Activated CD8-positive, alpha-beta T cell treated with anti-CD3 and anti-CD28 coated beads, Interleukin-2, amount 10 ng/mL, durations not matched to agents 7 days and 5 days (primary cell): ENCODE measurements at regions of chr4 and their contacts with region 1.

Region 1: DNA sequence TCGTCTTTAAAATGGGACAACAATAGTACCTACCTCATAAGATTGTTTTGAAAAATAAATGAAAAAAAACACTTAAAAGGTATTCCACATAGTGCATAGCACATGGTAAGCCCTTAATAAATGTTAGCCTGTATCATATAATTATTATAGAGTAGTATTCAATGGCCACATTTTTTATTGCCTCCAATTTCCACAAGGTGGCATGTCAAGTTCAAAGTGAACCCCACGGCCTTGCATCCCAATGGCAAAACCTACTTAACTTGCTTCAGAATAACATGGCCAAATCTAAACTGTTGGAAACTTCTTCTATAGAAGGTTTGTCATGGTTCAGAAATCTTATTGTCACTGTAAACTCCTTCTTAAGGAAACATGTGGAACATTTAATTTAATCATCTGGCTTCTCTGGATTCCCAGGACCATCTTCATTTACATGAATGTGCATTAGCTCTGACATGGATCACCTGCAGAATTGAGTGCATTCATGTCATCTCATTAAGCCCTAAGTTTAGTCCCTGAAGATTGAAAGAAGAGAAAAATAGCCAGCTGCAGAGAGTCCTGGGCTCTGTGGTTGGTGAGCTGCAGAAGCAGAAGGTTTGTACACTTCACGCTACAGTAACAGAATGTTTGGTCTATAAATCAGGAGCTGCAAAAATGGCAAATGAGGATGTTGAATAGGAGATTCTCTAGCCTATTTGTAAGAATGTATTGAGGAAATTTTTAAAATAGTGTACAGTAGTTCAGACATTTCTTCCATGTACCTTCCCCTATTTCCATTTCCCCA is 61.0 kb downstream of the ANXA3 start:
- DNase-seq: peak; percentile 47
- ATAC-seq: peak; percentile 60
- H3K4me3 Mint-ChIP-seq: no peak overlapping the region
- H3K27ac Mint-ChIP-seq: no peak overlapping the region
- H3K4me1 Mint-ChIP-seq: peaks cover 42% of the 10 kb centered on the region
- H3K27me3 Mint-ChIP-seq: no peaks in the 10 kb centered on the region

Region 2: GRCh38 chr4:78753091-78753490 is 140.5 kb after region 1 on chr4:
- CTCF ChIA-PET with region 1: no interaction called
- POLR2A ChIA-PET with region 1: no interaction called
- DNase-seq: no peak
- ATAC-seq: no peak
- H3K4me3 Mint-ChIP-seq: no peak overlapping the region
- H3K27ac Mint-ChIP-seq: no peak overlapping the region
- H3K4me1 Mint-ChIP-seq: no peaks in the 10 kb centered on the region
- H3K27me3 Mint-ChIP-seq: no peaks in the 10 kb centered on the region

Region 3: DNA sequence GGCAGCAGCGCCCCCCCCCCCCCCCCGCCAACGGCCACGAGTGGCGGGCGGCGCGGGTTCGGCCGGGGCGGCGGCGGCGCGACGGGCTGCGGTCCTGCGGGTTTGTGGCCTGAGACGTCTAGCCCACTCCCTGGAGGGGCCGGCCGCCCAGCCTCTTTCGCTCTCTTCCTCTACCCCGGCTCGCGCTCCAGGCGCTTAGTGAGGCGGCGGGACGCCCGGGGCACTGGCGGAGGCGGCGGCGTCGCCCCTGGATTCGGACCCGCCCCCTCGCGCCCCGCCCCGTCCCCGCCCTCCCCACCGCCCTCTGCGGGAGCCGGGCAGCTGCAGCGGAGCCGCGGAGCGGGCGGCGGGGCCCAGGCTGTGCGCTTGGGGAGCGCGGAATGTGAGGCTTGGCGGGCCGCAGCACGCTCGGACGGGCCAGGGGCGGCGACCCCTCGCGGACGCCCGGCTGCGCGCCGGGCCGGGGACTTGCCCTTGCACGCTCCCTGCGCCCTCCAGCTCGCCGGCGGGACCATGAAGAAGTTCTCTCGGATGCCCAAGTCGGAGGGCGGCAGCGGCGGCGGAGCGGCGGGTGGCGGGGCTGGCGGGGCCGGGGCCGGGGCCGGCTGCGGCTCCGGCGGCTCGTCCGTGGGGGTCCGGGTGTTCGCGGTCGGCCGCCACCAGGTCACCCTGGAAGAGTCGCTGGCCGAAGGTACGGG is 163.6 kb after region 1 on chr4 and contains the start of gene BMP2K:
- CTCF ChIA-PET with region 1: interaction called, 13 read pairs
- POLR2A ChIA-PET with region 1: interaction called, 4 read pairs
- DNase-seq: peak; percentile 82
- ATAC-seq: peak; percentile 83
- H3K4me3 Mint-ChIP-seq: peak within 1 kb of the TSS; percentile 87
- H3K27ac Mint-ChIP-seq: peak within 1 kb of the TSS; percentile 97
- H3K4me1 Mint-ChIP-seq: peaks cover 20% of the 10 kb centered on the region
- H3K27me3 Mint-ChIP-seq: no peaks in the 10 kb centered on the region
- total RNA-seq, gene BMP2K: 27.2 to 28.8 TPM

Region 4: DNA sequence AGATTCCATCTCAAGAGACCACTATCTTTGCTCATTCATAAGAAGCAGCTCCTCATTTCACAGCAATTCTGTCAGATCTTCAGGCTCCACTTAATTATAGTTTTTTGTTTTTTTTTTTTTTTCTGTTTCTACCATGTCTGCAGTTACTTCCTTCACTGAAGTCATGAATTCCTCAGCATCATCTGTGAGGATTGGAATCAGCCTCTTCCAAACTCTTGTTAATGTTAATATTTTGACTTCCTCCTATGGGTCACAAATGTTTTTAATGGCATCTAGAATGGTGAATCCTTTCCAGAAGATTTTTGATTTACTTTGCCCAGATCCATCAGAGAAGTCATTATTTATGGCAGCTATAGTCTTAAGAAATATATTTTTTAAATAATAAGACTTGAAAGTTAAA is 216.7 kb after region 1 on chr4:
- CTCF ChIA-PET with region 1: no interaction called
- POLR2A ChIA-PET with region 1: no interaction called
- DNase-seq: no peak
- ATAC-seq: no peak
- H3K4me3 Mint-ChIP-seq: no peak overlapping the region
- H3K27ac Mint-ChIP-seq: no peak overlapping the region
- H3K4me1 Mint-ChIP-seq: no peaks in the 10 kb centered on the region
- H3K27me3 Mint-ChIP-seq: no peaks in the 10 kb centered on the region

Region 5: DNA sequence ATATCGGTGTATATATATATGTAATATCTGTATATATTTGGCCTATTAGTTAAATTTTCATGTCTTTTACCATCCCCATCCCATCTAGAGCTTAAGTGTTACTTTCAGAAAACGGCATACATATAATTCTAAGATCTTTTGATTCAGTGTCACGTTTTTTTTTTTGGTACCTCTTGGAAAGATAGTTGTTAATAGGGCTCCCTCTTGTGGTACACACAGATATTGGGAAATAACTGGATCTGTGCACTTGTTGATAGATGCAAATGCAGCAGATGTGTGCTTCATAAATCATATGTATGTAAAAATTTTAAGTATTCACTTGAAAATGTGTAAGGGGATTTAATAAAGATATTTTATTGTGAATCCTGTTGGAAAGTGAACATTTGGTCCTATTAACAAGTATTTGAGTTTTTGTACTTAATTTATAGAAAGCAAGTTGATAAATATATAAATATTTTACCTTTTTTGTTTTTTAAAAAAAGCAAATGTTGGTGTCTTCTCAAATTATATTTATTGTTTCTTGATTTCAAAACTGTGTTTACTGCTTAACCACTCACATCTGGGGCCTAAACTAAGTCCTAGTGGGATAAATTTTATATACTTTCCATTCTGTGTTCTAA is 251.9 kb after region 1 on chr4:
- CTCF ChIA-PET with region 1: interaction called, 39 read pairs
- POLR2A ChIA-PET with region 1: no interaction called
- DNase-seq: peak; percentile 46
- ATAC-seq: peak; percentile 65
- H3K4me3 Mint-ChIP-seq: no peak overlapping the region
- H3K27ac Mint-ChIP-seq: no peak overlapping the region
- H3K4me1 Mint-ChIP-seq: peaks cover 5% of the 10 kb centered on the region
- H3K27me3 Mint-ChIP-seq: no peaks in the 10 kb centered on the region